ENCODE measurements at regions of chr7 and their contacts with region 1.

Region 1: DNA sequence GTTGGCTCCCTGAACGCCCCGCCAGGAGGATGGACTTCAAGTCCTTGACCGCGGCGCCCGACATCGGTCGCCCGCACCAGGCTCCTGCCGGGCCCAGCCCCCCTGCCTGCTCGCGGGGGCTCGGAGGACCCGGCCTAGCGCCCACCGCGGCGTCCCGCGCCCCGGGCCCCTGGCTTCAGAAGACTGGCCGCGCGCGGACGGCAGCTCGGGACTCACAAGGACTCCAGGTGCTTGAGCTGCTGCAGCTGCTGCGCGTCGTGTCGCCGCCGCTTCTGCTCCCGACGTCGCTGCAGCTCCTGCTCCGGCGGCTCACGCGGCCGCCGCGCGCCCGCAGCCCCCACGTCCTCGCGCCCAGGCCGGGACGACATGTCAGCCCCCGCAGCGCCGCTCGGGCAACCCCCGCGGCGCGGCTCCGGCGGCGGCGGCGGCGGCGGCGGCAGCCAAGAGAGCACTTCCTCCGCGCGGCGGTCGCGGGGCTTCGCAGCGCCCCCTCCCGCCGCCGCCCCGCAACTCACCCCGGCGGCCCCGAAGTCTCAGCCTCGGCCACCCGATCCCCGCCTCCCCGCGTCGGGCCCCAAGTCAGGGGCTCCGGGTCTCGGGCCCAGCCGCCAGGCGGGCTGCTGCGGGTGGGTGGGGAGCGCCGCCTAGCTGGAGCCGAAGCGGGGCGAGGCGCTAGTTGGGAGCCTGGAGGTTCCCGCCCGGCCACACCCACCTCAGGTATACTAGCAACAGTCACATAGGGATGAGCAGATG is at the start of gene RP9:
- DNase-seq: peak; percentile 91
- ATAC-seq: peak; percentile 88
- H3K4me3 ChIP-seq: peak within 1 kb of the TSS; percentile 63 to 94 (median 74)
- H3K4me3 Mint-ChIP-seq: peak within 1 kb of the TSS; percentile 95
- H3K27ac ChIP-seq: peak within 1 kb of the TSS; percentile 34 to 91
- H3K27ac Mint-ChIP-seq: peak within 1 kb of the TSS; percentile 79
- H3K4me1 ChIP-seq: peaks cover 42 to 45% of the 10 kb centered on the region in 2 donors
- H3K4me1 Mint-ChIP-seq: peaks cover 46% of the 10 kb centered on the region
- H3K27me3 ChIP-seq: peaks cover 0 to 4% (median 0%) of the 10 kb centered on the region in 4 experiments
- H3K27me3 Mint-ChIP-seq: peaks cover 14% of the 10 kb centered on the region
- CTCF ChIP-seq: peak; percentile 70
- total RNA-seq, gene RP9: 23.0 and 27.0 TPM in 2 replicates

Region 2: DNA sequence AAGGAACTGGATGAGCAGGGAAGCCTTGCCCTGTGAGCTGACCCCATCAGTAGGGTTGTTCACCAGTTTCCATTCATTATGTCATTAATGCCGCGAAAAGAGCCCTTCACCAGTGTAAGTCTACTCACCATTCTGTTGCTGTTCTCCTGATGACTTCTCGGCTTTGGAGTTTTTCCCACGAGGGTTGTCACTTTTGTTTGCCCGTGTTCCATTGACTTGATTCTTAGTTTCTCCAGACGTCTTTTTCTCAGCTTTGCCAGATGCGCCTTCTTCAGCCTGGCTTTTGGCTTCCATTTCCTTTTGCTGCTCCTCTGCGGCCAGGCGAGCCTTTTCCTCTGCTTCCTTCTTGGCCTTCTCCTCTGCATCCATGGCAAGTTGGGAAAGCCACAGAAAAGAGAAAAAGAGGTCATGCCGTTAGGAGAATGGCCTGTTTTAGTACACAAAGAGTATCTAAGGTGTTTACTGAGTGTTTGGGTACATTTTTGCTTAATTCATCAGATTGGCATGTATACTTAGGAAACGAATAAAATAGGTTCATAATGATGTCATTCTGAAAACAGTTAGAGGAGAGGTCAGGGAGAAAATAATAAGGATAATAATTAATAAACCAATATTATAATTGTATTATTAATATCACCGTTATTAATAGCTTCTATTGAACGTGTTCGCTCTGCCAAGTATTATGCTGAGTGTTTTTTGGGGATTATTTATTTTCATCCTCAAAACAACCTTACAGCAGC is 1293.2 kb before region 1 on chr7:
- CTCF ChIA-PET with region 1: no interaction called
- POLR2A ChIA-PET with region 1: no interaction called
- intact Hi-C with region 1: no loop called
- DNase-seq: no peak
- ATAC-seq: no peak
- H3K4me3 ChIP-seq: no peak overlapping the region
- H3K4me3 Mint-ChIP-seq: no peak overlapping the region
- H3K27ac ChIP-seq: no peak overlapping the region
- H3K27ac Mint-ChIP-seq: no peak overlapping the region
- H3K4me1 ChIP-seq: peaks cover 0 to 3% of the 10 kb centered on the region in 2 donors
- H3K4me1 Mint-ChIP-seq: peaks cover 7% of the 10 kb centered on the region
- H3K27me3 ChIP-seq: no peaks in the 10 kb centered on the region
- H3K27me3 Mint-ChIP-seq: no peaks in the 10 kb centered on the region
- CTCF ChIP-seq: no peak

Region 3: DNA sequence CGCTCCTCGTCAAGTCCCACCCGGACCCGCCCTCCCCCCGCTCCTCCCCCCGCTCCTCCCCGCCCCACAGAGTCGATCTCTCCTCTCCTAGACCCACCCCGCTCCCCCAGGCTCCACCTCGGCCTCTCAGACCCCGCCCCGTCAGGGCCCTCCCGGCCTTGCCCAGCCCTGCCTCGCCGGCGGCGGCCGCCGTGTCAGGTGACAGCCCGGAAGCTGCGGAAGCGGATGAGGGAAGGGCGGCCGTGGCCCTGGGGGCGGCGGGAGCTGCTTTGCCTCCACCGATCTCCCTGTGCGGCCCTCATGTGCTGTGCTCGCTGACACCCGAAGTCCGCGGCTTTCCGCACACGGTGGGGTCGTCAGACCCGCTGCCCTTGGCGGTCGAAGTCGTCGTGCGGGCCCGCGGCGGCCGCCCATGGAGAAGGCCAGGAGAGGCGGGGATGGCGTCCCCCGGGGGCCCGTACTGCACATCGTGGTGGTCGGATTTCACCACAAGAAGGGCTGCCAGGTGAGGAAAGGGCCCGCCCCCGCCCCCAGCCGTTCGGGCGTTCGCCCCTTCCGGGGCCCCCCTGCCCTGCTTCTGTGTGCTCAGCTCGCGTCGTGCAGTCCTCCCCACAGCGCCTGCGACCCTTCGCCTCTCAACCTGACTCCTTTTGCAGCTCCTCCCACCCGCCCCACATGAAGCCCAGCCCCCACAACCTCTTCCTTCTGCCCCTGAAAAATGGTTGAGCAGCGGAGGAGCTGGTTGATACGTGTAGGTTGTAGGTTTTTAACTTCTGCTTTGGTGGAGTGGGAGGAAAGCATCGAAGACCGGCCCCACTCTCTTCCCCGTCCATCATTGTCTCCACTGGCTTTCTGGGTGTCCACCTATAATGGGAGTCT is 613.6 kb before region 1 on chr7 and contains the start of gene AVL9:
- CTCF ChIA-PET with region 1: interaction called, 5 read pairs
- POLR2A ChIA-PET with region 1: interaction called, 12 read pairs
- intact Hi-C with region 1: loop called (anchors 2 kb)
- DNase-seq: peak; percentile 97
- ATAC-seq: peak; percentile 96
- H3K4me3 ChIP-seq: peak within 1 kb of the TSS; percentile 65 to 97 (median 91)
- H3K4me3 Mint-ChIP-seq: peak within 1 kb of the TSS; percentile 84
- H3K27ac ChIP-seq: peak within 1 kb of the TSS; percentile 85 to 98
- H3K27ac Mint-ChIP-seq: peak within 1 kb of the TSS; percentile 96
- H3K4me1 ChIP-seq: peaks cover 14 to 16% of the 10 kb centered on the region in 2 donors
- H3K4me1 Mint-ChIP-seq: peaks cover 36% of the 10 kb centered on the region
- H3K27me3 ChIP-seq: no peaks in the 10 kb centered on the region
- H3K27me3 Mint-ChIP-seq: no peaks in the 10 kb centered on the region
- CTCF ChIP-seq: no peak
- total RNA-seq, gene AVL9: 48.0 and 63.3 TPM in 2 replicates

Region 4: GRCh38 chr7:32765185-32765584 is 344.0 kb before region 1 on chr7:
- CTCF ChIA-PET with region 1: interaction called, 4 read pairs
- POLR2A ChIA-PET with region 1: no interaction called
- intact Hi-C with region 1: loop called (anchors 1 kb)
- DNase-seq: no peak
- ATAC-seq: no peak
- H3K4me3 ChIP-seq: no peak overlapping the region
- H3K4me3 Mint-ChIP-seq: no peak overlapping the region
- H3K27ac ChIP-seq: no peak overlapping the region
- H3K27ac Mint-ChIP-seq: no peak overlapping the region
- H3K4me1 ChIP-seq: peaks cover 19 to 21% of the 10 kb centered on the region in 2 donors
- H3K4me1 Mint-ChIP-seq: peaks cover 15% of the 10 kb centered on the region
- H3K27me3 ChIP-seq: peaks cover 0 to 26% (median 18%) of the 10 kb centered on the region in 4 experiments
- H3K27me3 Mint-ChIP-seq: peaks cover 45% of the 10 kb centered on the region
- CTCF ChIP-seq: no peak

Region 5: GRCh38 chr7:32846701-32847100 is 262.5 kb before region 1 on chr7:
- CTCF ChIA-PET with region 1: interaction called, 66 read pairs
- POLR2A ChIA-PET with region 1: no interaction called
- intact Hi-C with region 1: loop called (anchors 1 kb)
- DNase-seq: peak; percentile 91
- ATAC-seq: peak; percentile 100
- H3K4me3 ChIP-seq: no peak overlapping the region
- H3K4me3 Mint-ChIP-seq: no peak overlapping the region
- H3K27ac ChIP-seq: no peak overlapping the region
- H3K27ac Mint-ChIP-seq: no peak overlapping the region
- H3K4me1 ChIP-seq: peaks cover 6 to 7% of the 10 kb centered on the region in 2 donors
- H3K4me1 Mint-ChIP-seq: peaks cover 7% of the 10 kb centered on the region
- H3K27me3 ChIP-seq: peaks cover 0 to 7% (median 1%) of the 10 kb centered on the region in 4 experiments
- H3K27me3 Mint-ChIP-seq: peaks cover 18% of the 10 kb centered on the region
- CTCF ChIP-seq: peak; percentile 89

Region 6: DNA sequence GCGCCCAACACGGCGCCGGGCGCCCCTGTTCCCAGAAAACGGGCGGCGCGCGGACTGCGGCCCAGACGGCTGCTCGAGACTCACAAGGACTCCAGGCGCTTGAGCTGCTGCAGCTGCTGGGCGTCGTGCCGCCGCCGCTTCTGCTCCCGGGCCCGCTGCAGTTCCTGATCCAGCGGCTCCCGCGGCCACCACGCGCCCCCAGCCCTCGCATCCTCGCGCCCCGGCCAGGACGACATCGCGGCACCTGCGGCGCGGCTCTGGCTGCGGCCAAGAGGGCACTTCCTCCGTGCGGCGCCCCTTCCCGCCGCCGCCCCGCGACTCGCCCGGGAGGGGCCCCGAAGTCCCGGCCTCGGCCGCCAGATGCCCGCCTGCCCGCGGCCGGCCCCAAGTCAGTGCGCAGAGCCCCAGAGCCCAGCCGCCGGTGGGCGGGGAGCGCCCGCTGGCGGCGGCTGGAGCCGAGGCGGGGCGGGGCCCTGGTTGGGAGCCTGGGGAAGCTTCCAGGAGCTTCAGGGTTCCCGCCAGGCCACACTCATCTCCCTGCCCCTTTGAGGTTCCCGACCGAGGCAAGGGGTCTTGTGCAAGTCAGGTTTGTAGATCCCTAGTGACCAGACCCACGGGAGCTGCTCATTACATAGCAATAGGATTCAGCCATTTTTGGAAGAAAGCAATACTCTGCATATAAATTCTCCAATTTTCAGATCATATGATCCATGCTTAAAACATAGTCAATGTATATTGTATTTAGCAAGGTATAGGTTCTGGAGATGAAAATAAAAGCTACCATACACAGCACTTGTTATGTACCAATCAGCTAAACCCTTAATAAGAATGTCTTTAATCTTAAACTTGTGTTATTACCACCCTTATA is 166.2 kb before region 1 on chr7:
- CTCF ChIA-PET with region 1: interaction called, 23 read pairs
- POLR2A ChIA-PET with region 1: no interaction called
- intact Hi-C with region 1: loop called (anchors 1 kb)
- DNase-seq: peak; percentile 82
- ATAC-seq: peak; percentile 81
- H3K4me3 ChIP-seq: peak overlapping the region; percentile 60 to 78 (median 70)
- H3K4me3 Mint-ChIP-seq: peak overlapping the region; percentile 99
- H3K27ac ChIP-seq: peak overlapping the region; percentile 41 to 65
- H3K27ac Mint-ChIP-seq: peak overlapping the region; percentile 73
- H3K4me1 ChIP-seq: peaks cover 17 to 21% of the 10 kb centered on the region in 2 donors
- H3K4me1 Mint-ChIP-seq: peaks cover 23% of the 10 kb centered on the region
- H3K27me3 ChIP-seq: no peaks in the 10 kb centered on the region
- H3K27me3 Mint-ChIP-seq: no peaks in the 10 kb centered on the region
- CTCF ChIP-seq: peak; percentile 70

Region 7: GRCh38 chr7:33050535-33051318 is 58.5 kb before region 1 on chr7:
- CTCF ChIA-PET with region 1: interaction called, 19 read pairs
- POLR2A ChIA-PET with region 1: no interaction called
- intact Hi-C with region 1: no loop called
- DNase-seq: peak; percentile 73
- ATAC-seq: peak; percentile 70
- H3K4me3 ChIP-seq: peak overlapping the region in 2 of 5 experiments; percentile 40 to 48
- H3K4me3 Mint-ChIP-seq: peak overlapping the region; percentile 29
- H3K27ac ChIP-seq: peak overlapping the region; percentile 60 to 83
- H3K27ac Mint-ChIP-seq: peak overlapping the region; percentile 28
- H3K4me1 ChIP-seq: peaks cover 39 to 47% of the 10 kb centered on the region in 2 donors
- H3K4me1 Mint-ChIP-seq: peaks cover 55% of the 10 kb centered on the region
- H3K27me3 ChIP-seq: no peaks in the 10 kb centered on the region
- H3K27me3 Mint-ChIP-seq: no peaks in the 10 kb centered on the region
- CTCF ChIP-seq: peak; percentile 76

Region 8: DNA sequence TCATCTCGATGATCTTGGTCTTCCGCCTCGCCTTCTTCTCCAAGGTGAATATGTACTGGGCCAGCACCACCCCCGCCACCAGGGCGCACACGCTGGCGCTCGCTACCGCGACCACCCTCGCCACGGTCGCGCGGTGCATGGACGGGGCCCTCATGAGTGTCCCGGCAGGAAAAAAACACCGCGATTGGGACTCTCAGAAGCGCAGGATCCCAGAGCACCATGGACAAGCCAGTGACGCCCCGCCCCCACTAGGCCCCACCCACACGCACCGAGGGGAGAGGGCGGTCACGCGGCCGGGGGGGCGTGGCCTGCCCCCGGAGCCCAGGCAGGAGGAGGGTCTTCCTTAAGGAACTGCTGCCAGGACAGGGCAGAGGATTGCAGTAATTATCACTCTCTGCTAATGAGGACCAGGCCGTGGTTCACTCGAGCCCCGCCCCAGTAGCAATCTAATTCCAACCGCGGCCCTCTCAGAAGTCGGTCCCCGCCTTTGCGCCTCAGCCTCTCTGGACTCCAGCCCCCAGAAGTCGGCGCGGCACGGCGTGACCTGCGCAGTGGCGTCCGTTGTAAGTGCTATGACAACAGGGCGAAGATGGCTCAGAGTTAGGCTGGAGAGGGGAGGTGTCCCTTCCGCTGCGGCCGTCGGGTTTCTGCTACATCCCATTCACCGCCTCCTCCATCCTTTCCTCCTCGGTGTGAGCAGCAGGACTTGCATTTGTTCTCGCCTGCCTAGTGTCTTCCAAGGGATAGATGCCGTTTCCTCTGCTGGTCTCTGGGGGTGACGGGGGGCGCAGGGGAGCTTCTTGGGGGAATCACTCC is 20.0 kb after region 1 on chr7 and contains the start of gene BBS9:
- CTCF ChIA-PET with region 1: interaction called, 7 read pairs
- POLR2A ChIA-PET with region 1: interaction called, 4 read pairs
- intact Hi-C with region 1: loop called (anchors 1 kb)
- DNase-seq: peak; percentile 96
- ATAC-seq: peak; percentile 91
- H3K4me3 ChIP-seq: peak within 1 kb of the TSS; percentile 39 to 81 (median 62)
- H3K4me3 Mint-ChIP-seq: peak within 1 kb of the TSS; percentile 97
- H3K27ac ChIP-seq: peak within 1 kb of the TSS; percentile 22 to 79
- H3K27ac Mint-ChIP-seq: peak within 1 kb of the TSS; percentile 91
- H3K4me1 ChIP-seq: peaks cover 7 to 9% of the 10 kb centered on the region in 2 donors
- H3K4me1 Mint-ChIP-seq: peaks cover 24% of the 10 kb centered on the region
- H3K27me3 ChIP-seq: no peaks in the 10 kb centered on the region
- H3K27me3 Mint-ChIP-seq: no peaks in the 10 kb centered on the region
- CTCF ChIP-seq: peak; percentile 18
- total RNA-seq, gene BBS9: 45.2 and 48.4 TPM in 2 replicates